Activated CD4-positive, alpha-beta T cell treated with anti-CD3 and anti-CD28 coated beads for 36 hours (primary cell): ENCODE measurements at regions of chr19 and their contacts with region 1.

Region 1: DNA sequence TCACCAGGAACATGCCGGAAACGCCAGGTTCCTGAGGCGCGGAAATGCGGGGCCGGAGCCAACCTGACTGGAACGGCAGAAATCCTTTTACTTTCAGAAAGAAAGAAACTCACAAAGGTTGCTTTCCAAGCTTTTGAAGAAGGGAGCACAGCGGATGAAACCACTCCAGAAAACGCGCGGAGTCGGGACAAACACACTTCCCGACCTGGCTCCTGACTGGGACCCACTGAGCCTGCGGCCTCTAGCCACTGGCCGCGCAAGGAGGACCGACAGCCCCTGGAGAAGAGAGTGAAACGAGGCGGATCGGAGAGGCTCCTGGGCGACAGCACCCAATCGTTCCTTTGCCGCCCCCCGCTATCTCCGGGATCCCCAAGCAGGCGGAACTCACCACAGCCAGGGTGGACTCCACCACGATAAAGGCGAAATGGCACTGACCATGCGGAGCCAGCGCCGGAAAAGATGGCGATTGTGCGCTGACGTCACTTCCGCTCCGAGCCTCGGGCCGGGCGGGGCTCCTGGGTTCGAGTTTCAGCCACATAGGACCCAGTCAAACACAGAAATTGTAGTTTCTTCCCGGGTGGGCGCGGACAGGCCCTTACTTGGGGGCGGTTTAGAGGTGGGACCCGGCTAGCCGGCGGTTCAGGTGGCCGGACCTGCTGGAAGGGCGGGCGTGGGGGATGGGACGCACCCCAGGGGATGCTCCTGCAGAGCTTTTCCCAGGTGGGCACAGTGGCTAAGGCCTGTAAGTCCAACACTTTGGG is at the start of gene ZNF121:
- DNase-seq: peak; percentile 91
- ATAC-seq: peak; percentile 82
- H3K4me3 Mint-ChIP-seq: peak within 1 kb of the TSS; percentile 93
- H3K27ac Mint-ChIP-seq: peak within 1 kb of the TSS; percentile 94
- H3K4me1 Mint-ChIP-seq: peaks cover 29% of the 10 kb centered on the region
- H3K27me3 Mint-ChIP-seq: peaks cover 4% of the 10 kb centered on the region
- total RNA-seq, gene ZNF121: 71.4 to 75.3 TPM

Region 2: GRCh38 chr19:9205501-9206113 is 378.6 kb before region 1 on chr19:
- CTCF ChIA-PET with region 1: no interaction called
- POLR2A ChIA-PET with region 1: no interaction called
- intact Hi-C with region 1: loop called in 1 of 2 experiments (anchors 5 kb)
- DNase-seq: peak; percentile 79
- ATAC-seq: peak; percentile 75
- H3K4me3 Mint-ChIP-seq: no peak overlapping the region
- H3K27ac Mint-ChIP-seq: no peak overlapping the region
- H3K4me1 Mint-ChIP-seq: no peaks in the 10 kb centered on the region
- H3K27me3 Mint-ChIP-seq: peaks cover 9% of the 10 kb centered on the region

Region 3: DNA sequence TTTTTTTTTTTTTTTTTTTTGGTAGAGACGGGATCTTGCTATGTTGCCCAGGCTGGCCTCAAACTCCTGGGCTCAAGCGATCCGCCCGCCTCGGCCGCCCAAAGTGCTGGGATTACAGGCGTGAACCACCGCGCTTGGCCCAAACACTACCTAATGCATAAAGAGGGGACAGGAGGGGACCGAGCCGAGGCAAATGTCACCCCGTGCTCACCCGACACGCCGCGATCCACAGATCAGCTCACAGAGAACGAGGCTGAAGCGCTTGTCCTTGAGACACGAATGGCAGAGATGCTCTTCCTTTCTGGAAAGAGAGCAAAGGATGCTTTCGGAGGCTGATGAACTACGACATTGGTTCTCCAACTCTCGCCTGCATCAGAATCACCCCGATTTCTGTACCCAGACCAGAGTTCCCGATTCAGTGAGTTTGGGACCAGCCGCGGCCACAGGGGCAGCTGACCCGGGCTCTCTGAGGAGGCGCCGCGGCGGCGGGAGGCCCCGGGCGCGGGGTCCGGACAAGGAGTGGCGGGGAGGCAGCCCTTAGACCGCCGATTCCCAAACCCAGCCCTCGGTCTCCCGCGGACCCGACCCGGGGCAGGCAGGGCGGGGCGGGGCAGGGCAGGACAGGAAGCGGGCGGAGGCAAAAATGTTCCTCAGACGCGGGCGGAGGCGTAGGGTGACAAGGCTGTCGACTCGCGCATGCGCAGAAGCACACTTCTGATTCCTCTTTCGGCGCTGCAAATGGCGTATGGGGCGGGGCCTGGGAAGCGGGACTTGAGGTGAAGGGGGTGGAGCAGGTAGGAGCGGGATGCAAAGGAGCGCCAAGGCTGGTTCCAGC is 274.9 kb before region 1 on chr19 and contains the start of gene ZNF699:
- CTCF ChIA-PET with region 1: no interaction called
- POLR2A ChIA-PET with region 1: no interaction called
- intact Hi-C with region 1: loop called in 1 of 2 experiments (anchors 10 kb)
- DNase-seq: peak; percentile 100
- ATAC-seq: peak; percentile 90
- H3K4me3 Mint-ChIP-seq: peak within 1 kb of the TSS; percentile 97
- H3K27ac Mint-ChIP-seq: peak within 1 kb of the TSS; percentile 97
- H3K4me1 Mint-ChIP-seq: peaks cover 13% of the 10 kb centered on the region
- H3K27me3 Mint-ChIP-seq: no peaks in the 10 kb centered on the region
- total RNA-seq, gene ZNF699: 6.7 to 7.1 TPM

Region 4: GRCh38 chr19:9538183-9539058 is 45.8 kb before region 1 on chr19 and contains the start of gene ZNF426:
- CTCF ChIA-PET with region 1: no interaction called
- POLR2A ChIA-PET with region 1: no interaction called
- intact Hi-C with region 1: loop called in 1 of 2 experiments (anchors 1 kb)
- DNase-seq: peak; percentile 95
- ATAC-seq: peak; percentile 97
- H3K4me3 Mint-ChIP-seq: peak within 1 kb of the TSS; percentile 97
- H3K27ac Mint-ChIP-seq: peak within 1 kb of the TSS; percentile 98
- H3K4me1 Mint-ChIP-seq: peaks cover 14% of the 10 kb centered on the region
- H3K27me3 Mint-ChIP-seq: no peaks in the 10 kb centered on the region
- total RNA-seq, gene ZNF426: 10.4 to 12.3 TPM

Region 5: GRCh38 chr19:9674663-9675357 is 90.6 kb after region 1 on chr19 and contains the start of gene ZNF562:
- CTCF ChIA-PET with region 1: no interaction called
- POLR2A ChIA-PET with region 1: no interaction called
- intact Hi-C with region 1: loop called (anchors 2 to 5 kb)
- DNase-seq: peak; percentile 91
- ATAC-seq: peak; percentile 78
- H3K4me3 Mint-ChIP-seq: peak within 1 kb of the TSS; percentile 94
- H3K27ac Mint-ChIP-seq: peak within 1 kb of the TSS; percentile 97
- H3K4me1 Mint-ChIP-seq: peaks cover 30% of the 10 kb centered on the region
- H3K27me3 Mint-ChIP-seq: no peaks in the 10 kb centered on the region
- total RNA-seq, gene ZNF562: 29.9 to 39.7 TPM